ENCODE measurements at regions of chr14 and their contacts with region 1.

Region 1: DNA sequence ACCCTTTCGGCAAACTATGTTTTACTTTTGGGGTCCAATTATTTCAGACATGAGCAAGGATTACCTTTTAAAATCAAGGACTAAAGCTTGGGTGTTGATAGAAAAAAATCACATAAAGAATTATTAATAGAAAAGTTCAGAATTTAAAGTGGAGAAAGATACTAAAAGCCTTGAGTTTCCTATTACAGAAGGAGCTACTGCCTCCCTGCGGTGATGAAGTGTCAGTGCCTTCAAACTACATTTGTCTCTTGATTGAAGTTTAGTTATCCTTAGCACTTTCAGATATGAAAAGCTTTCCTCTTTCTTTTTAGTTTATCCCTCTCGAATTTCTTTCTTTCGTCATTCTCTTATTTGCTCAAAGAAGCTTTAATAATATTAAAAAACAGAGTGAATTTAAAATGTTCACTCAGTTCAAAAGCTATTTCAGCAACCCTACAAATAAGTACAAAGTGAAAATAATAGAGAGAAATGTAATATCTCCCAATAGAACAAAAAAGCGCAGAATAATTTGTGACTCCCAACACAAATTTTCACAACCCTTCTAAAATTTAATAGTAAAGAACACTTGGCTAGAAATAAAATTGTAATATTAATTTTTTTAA is 87.6 kb downstream of the SEC23A start:
- DNase-seq: peak; percentile 30 to 52 (median 36)
- ATAC-seq: peak; percentile 71; the same call in 2 of the 3 replicates
- H3K4me3 ChIP-seq: no peak overlapping the region
- H3K27ac ChIP-seq: no peak overlapping the region
- H3K4me1 ChIP-seq: no peaks in the 10 kb centered on the region
- H3K27me3 ChIP-seq: no peaks in the 10 kb centered on the region
- CTCF ChIP-seq: peak; percentile 42 to 75 (median 54); a peak in 5 of 6 replicates
- EP300 ChIP-seq: no peak
- POLR2A ChIP-seq: no peak
- RAD21 ChIP-seq: peak; percentile 59 to 75

Region 2: DNA sequence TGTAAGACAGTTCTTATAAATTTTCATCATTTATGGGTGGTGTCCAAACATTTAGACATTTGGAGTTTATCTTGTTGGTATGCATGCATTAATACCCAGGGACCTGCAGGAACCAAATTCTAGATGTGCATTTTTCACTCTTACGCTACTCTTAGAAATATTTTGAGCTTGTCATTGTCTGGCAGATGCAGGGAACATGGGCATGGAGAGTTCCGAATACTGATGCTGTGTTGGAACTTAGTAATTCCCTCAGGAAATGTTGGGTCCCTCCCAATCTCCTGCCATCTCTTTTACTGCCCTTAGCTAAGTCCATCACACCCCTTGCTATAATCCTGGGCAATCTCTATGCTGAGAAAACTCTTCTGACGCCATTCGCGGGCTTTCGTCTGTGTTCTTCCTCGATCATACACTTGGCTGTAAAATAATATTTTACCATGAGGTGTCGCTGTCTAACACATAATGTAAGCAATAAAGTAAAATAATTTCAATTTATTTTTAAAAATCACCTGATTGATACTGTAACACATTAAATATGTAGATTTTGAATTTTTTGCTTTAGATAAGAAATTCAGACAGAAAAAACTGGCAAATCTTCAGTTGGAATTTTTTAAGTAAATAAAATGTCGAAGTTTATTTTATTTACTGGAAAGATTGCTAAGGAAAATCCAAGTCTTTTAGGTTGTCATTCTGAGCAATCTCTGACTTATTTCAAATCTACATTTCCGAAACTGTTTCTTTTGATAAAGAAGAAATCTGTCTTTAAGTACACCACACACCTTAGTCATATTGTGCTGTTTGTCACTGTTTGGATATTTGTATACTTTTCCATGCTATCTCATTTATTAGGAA is 1111.9 kb before region 1 on chr14:
- CTCF ChIA-PET with region 1: interaction called, 3 read pairs
- POLR2A ChIA-PET with region 1: no interaction called
- in situ Hi-C with region 1: no loop called
- intact Hi-C with region 1: loop called (anchors 5 kb)
- DNase-seq: peak; percentile 10 to 25 (median 20)
- ATAC-seq: peak; percentile 56; the same call in 2 of the 3 replicates
- H3K4me3 ChIP-seq: no peak overlapping the region
- H3K27ac ChIP-seq: no peak overlapping the region
- H3K4me1 ChIP-seq: no peaks in the 10 kb centered on the region
- H3K27me3 ChIP-seq: no peaks in the 10 kb centered on the region
- CTCF ChIP-seq: peak; percentile 23 to 52 (median 28); a peak in 3 of 6 replicates
- EP300 ChIP-seq: no peak
- POLR2A ChIP-seq: no peak
- RAD21 ChIP-seq: peak; percentile 26 to 59

Region 3: DNA sequence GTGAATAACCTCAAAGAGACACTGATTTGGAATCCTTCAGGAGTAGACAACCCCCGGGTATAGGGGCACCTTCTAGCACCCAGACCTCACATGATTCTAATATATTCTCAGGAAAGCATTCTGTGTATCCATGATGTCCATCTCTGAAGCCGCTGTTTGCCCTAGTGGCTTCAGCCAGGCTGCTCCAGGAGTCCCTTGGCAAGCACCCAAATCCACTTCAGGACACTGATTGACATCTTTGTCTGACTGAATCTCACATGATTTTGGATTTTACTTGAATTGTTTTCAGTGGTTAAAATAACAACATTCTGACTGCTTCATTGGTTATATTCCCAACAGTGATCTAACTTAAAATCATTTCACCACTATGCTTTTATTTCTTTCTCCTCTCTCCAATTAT is 369.1 kb before region 1 on chr14:
- CTCF ChIA-PET with region 1: no interaction called
- POLR2A ChIA-PET with region 1: no interaction called
- in situ Hi-C with region 1: no loop called
- intact Hi-C with region 1: no loop called
- DNase-seq: no peak
- ATAC-seq: no peak
- H3K4me3 ChIP-seq: no peak overlapping the region
- H3K27ac ChIP-seq: no peak overlapping the region
- H3K4me1 ChIP-seq: no peaks in the 10 kb centered on the region
- H3K27me3 ChIP-seq: no peaks in the 10 kb centered on the region
- CTCF ChIP-seq: no peak
- EP300 ChIP-seq: no peak
- POLR2A ChIP-seq: no peak
- RAD21 ChIP-seq: no peak

Region 4: DNA sequence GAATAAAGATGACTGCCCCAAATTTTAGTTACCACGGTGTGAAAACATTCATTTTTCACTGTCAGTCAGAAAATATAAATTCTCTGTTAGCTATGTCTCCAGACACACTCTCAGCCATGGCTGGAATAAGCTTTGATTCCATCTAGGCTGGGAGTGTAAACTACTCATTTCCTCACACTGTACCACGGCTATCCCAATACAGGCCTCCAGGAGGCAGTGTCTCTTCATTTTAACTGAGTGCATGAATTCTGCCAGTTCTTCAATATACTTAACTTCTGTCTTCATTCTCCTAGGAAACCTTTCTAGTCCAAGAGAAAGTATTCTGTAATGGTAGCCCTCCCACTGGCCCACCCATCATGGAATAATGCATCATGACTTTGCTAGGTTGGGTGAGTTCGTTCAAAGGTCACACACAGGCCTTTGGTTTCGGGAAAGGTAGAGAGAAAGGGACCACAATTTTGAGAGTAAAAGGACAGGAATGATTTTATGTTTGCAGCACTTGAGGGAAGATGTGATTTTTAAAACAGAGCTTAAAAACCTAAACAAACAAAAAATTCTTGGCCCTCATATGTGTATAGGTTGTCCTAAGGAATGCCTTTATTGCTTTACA is 293.5 kb before region 1 on chr14:
- CTCF ChIA-PET with region 1: interaction called, 8 read pairs
- POLR2A ChIA-PET with region 1: no interaction called
- in situ Hi-C with region 1: loop called (anchors 25 kb)
- intact Hi-C with region 1: loop called (anchors 2 kb)
- DNase-seq: peak; percentile 12 to 34 (median 26)
- ATAC-seq: peak; percentile 80
- H3K4me3 ChIP-seq: no peak overlapping the region
- H3K27ac ChIP-seq: no peak overlapping the region
- H3K4me1 ChIP-seq: no peaks in the 10 kb centered on the region
- H3K27me3 ChIP-seq: no peaks in the 10 kb centered on the region
- CTCF ChIP-seq: peak; percentile 27 to 61 (median 59); a peak in 5 of 6 replicates
- EP300 ChIP-seq: no peak
- POLR2A ChIP-seq: no peak
- RAD21 ChIP-seq: peak; percentile 47 to 65

Region 5: DNA sequence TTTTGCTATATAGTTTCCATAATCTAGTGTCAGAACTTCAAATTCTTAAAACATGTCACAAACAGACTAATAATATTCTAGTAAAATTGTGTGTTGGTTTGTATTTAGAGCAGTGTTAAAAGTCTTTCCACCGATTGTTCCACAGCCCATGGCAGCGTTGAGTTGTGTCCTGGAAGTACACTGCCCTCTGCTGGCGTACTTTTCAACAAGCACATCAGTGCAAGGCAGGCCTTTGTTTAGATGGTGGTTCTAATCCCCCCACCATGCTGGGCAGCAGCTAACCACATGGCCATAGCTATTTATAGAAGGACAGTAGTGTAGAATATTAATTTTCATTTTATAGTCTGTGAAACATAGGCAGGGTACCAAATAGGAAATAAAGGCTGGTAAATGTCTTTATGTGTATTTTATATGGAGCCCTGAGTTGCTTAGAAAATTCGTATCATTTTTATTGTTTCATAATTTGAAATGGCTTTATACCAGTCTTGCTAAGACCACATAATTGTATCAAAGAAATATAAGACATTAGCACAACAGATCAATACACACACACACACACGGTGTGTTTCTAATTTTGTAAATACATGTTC is 147.8 kb before region 1 on chr14:
- CTCF ChIA-PET with region 1: no interaction called
- POLR2A ChIA-PET with region 1: no interaction called
- in situ Hi-C with region 1: no loop called
- intact Hi-C with region 1: loop called (anchors 2 kb)
- DNase-seq: peak; percentile 27 to 70 (median 41)
- ATAC-seq: peak; percentile 96
- H3K4me3 ChIP-seq: no peak overlapping the region
- H3K27ac ChIP-seq: no peak overlapping the region
- H3K4me1 ChIP-seq: no peaks in the 10 kb centered on the region
- H3K27me3 ChIP-seq: no peaks in the 10 kb centered on the region
- CTCF ChIP-seq: peak; percentile 52 to 67 (median 66)
- EP300 ChIP-seq: no peak
- POLR2A ChIP-seq: no peak
- RAD21 ChIP-seq: peak; percentile 23 to 68; a peak in 2 of 4 replicates

Region 6: GRCh38 chr14:38948171-38948570 is 67.3 kb before region 1 on chr14:
- CTCF ChIA-PET with region 1: no interaction called
- POLR2A ChIA-PET with region 1: no interaction called
- in situ Hi-C with region 1: no loop called
- intact Hi-C with region 1: loop called (anchors 10 kb)
- DNase-seq: no peak
- ATAC-seq: no peak
- H3K4me3 ChIP-seq: no peak overlapping the region
- H3K27ac ChIP-seq: no peak overlapping the region
- H3K4me1 ChIP-seq: no peaks in the 10 kb centered on the region
- H3K27me3 ChIP-seq: no peaks in the 10 kb centered on the region
- CTCF ChIP-seq: no peak
- EP300 ChIP-seq: no peak
- POLR2A ChIP-seq: no peak
- RAD21 ChIP-seq: no peak

Measured in K562 (cell line).